ENCODE measurements at regions of chr5 and their contacts with region 1.

Region 1: GRCh38 chr5:167888395-167888794 is 403.1 kb upstream of the WWC1 start:
- DNase-seq: no peak
- ATAC-seq: peak; percentile 38
- H3K4me3 Mint-ChIP-seq: no peak overlapping the region
- H3K27ac Mint-ChIP-seq: no peak overlapping the region
- H3K4me1 Mint-ChIP-seq: peaks cover 35% of the 10 kb centered on the region
- H3K27me3 Mint-ChIP-seq: no peaks in the 10 kb centered on the region; the same call in 1 of the 2 replicates
- CTCF ChIP-seq: no peak

Region 2: DNA sequence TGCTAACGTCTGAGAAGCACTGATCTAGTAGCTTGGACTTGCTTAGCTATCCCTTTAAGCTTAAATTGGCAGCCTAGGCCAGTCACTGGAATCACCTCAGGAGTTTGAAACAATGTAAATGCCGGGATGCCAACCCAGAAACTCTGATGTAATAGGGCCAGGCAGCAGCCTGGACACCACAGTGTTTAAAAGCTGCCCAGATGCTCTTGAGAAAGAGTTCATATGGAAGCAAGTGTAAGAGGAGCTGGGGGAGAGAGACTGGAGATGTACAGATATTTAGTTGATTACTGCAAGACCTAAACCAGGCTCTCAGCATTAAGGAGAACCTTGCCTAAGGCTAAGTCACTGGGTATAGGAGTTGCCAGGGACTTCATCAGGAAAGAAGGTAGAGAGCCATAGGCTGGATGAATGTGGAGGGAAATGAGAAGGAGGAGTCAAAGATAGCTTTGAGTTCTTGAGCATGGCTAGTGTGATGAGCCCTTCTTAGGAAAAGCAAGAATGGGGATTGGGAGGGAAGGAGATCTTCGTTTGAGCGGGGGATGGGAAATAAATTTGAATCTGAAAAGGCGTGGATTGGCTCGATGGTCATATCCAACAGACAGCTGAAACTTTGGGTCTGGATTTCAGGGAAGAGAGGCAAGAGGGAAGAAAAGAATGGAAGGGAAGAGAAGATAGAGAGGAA is 10.1 kb after region 1 on chr5:
- CTCF ChIA-PET with region 1: interaction called, 13 read pairs
- POLR2A ChIA-PET with region 1: no interaction called
- DNase-seq: no peak
- ATAC-seq: peak; percentile 71
- H3K4me3 Mint-ChIP-seq: peak overlapping the region; percentile 25
- H3K27ac Mint-ChIP-seq: peak overlapping the region; percentile 63
- H3K4me1 Mint-ChIP-seq: peaks cover 60% of the 10 kb centered on the region
- H3K27me3 Mint-ChIP-seq: peaks cover 5% of the 10 kb centered on the region
- CTCF ChIP-seq: no peak